CD14-positive monocyte (primary cell): ENCODE measurements at regions of chr1 and their contacts with region 1.

Region 1: DNA sequence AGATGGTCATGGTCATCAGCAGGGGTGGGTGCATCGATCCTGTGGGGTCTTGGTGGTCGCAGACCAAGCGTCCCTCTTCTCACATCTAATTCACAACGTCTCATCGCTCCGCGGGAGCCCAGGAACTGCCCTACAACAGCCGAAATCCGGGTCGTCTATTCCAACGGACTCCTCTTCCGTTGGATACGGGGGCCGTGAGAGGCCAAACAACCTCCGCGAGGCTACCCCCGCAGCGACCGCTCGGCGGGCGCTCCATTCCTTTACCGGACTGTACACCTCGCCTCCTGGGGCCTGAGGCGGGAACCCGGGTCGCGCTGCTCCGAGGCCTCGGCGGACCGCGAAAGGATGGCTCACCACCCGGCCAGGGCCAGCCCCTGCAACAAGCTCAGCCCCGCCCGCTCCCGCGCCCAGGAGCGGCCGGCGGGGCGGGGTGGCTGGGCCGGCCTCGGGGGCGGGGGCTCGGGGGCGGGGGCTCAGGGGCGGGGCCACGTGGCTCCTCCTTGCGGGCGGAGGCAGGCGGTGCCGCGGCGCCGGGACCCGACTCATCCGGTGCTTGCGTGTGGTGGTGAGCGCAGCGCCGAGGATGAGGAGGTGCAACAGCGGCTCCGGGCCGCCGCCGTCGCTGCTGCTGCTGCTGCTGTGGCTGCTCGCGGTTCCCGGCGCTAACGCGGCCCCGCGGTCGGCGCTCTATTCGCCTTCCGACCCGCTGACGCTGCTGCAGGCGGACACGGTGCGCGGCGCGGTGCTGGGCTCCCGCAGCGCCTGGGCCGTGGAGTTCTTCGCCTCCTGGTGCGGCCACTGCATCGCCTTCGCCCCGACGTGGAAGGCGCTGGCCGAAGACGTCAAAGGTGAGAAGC is at the start of gene QSOX1:
- DNase-seq: peak; percentile 89 to 93 (median 89)
- H3K4me3 ChIP-seq: peak within 1 kb of the TSS; percentile 83 to 96 (median 84)
- H3K4me3 Mint-ChIP-seq: peak within 1 kb of the TSS; percentile 97 to 100
- H3K27ac ChIP-seq: peak within 1 kb of the TSS; percentile 75 to 93
- H3K27ac Mint-ChIP-seq: peak within 1 kb of the TSS; percentile 95 to 98 (median 97)
- H3K4me1 ChIP-seq: peaks cover 64 to 74% of the 10 kb centered on the region in 2 donors
- H3K4me1 Mint-ChIP-seq: peaks cover 77% of the 10 kb centered on the region
- H3K27me3 ChIP-seq: no peaks in the 10 kb centered on the region
- H3K27me3 Mint-ChIP-seq: peaks cover 0 to 5% (median 0%) of the 10 kb centered on the region in 3 donors
- CTCF ChIP-seq: peak; percentile 23
- polyA plus RNA-seq, gene QSOX1: 34.5 to 86.5 (median 35.8) TPM

Region 2: GRCh38 chr1:179882243-179883039 is 272.1 kb before region 1 on chr1 and contains the start of gene TOR1AIP1:
- intact Hi-C with region 1: loop called in 1 of 2 experiments (anchors 10 kb)
- DNase-seq: peak; percentile 98 to 99 (median 99)
- H3K4me3 ChIP-seq: peak within 1 kb of the TSS; percentile 83 to 99 (median 86)
- H3K4me3 Mint-ChIP-seq: peak within 1 kb of the TSS; percentile 95 to 99
- H3K27ac ChIP-seq: peak within 1 kb of the TSS; percentile 99 to 100
- H3K27ac Mint-ChIP-seq: peak within 1 kb of the TSS; percentile 100
- H3K4me1 ChIP-seq: peaks cover 30 to 53% of the 10 kb centered on the region in 2 donors
- H3K4me1 Mint-ChIP-seq: peaks cover 36% of the 10 kb centered on the region
- H3K27me3 ChIP-seq: no peaks in the 10 kb centered on the region
- H3K27me3 Mint-ChIP-seq: no peaks in the 10 kb centered on the region
- CTCF ChIP-seq: peak; percentile 31
- polyA plus RNA-seq, gene TOR1AIP1: 18.8 to 114 (median 77.5) TPM

Region 3: DNA sequence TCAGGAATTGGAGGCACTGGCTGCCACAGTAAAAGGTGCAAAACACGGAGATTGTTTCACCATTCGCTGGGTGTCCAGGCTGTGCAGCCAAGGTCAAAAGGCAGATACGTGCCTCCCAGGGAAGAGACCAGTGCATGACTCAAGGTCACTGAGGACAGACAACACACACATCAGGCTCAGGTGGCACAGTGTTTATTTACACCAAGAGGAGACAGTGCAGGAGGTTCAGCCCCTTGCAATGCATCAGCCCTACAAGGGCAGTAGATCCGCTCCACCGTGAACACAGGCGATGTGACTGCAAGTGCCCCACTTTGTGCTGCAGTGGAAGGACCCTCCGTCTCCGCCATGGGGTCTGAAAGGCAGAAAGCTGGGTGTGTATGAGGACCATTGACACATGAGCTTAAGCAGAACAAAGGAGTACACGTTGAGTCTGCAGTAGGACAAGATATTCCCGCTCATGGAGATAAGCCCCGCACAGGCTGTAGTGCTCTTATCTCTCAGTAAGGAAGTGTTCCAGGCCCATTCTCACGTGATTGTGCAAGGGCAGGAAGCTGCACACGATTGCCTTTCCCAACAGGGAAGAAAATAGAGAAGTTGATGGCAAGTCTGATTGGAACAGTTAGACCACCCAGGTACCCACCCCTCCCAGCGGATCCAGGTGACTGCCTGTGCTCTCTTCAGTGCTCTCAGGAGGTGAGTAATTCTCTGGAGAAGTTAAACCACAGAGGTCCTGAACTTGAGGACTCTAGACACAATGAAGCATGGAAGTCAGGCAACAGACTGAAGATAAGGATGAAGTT is 37.4 kb before region 1 on chr1:
- intact Hi-C with region 1: loop called in 1 of 2 experiments (anchors 5 kb)
- DNase-seq: peak; percentile 35 to 72 (median 67)
- H3K4me3 ChIP-seq: peak overlapping the region in 1 of 3 experiments; percentile 46
- H3K4me3 Mint-ChIP-seq: peak overlapping the region; percentile 37 to 67
- H3K27ac ChIP-seq: peak overlapping the region in 1 of 2 donors; percentile 36
- H3K27ac Mint-ChIP-seq: peak overlapping the region; percentile 28 to 87 (median 70)
- H3K4me1 ChIP-seq: peaks cover 32 to 33% of the 10 kb centered on the region in 2 donors
- H3K4me1 Mint-ChIP-seq: peaks cover 33% of the 10 kb centered on the region
- H3K27me3 ChIP-seq: no peaks in the 10 kb centered on the region
- H3K27me3 Mint-ChIP-seq: peaks cover 0 to 2% (median 1%) of the 10 kb centered on the region in 3 donors
- CTCF ChIP-seq: no peak

Region 4: DNA sequence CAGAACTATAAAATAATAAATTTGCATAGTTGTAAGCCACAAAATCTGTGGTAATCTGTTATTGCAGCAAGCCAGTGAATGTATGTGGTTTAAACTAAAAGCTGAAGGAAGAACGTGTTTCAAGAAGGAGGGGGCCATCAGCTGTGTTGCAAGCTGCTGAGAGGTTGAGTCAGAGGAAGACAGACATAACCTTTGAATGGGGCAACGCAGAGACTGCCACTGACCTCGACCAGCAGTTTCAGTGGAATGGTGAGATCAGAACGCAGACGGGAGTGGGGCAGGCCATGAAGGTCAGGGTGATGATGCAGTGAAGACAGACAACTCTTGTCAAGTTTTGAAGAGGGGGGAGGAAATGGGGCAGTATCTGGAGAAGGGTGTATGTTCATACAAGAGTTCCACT is 23.0 kb before region 1 on chr1:
- intact Hi-C with region 1: loop called in 1 of 2 experiments (anchors 1 kb)
- DNase-seq: peak; percentile 98 to 99 (median 98)
- H3K4me3 ChIP-seq: peak overlapping the region in 1 of 3 experiments; percentile 62
- H3K4me3 Mint-ChIP-seq: peak overlapping the region; percentile 54 to 81
- H3K27ac ChIP-seq: peak overlapping the region; percentile 77 to 88
- H3K27ac Mint-ChIP-seq: peak overlapping the region; percentile 90 to 98 (median 96)
- H3K4me1 ChIP-seq: peaks cover 46 to 64% of the 10 kb centered on the region in 2 donors
- H3K4me1 Mint-ChIP-seq: peaks cover 57% of the 10 kb centered on the region
- H3K27me3 ChIP-seq: no peaks in the 10 kb centered on the region
- H3K27me3 Mint-ChIP-seq: no peaks in the 10 kb centered on the region
- CTCF ChIP-seq: no peak